Spleen (tissue), 13 donors: ENCODE measurements at regions of chr9 and their contacts with region 1.

Region 1: DNA sequence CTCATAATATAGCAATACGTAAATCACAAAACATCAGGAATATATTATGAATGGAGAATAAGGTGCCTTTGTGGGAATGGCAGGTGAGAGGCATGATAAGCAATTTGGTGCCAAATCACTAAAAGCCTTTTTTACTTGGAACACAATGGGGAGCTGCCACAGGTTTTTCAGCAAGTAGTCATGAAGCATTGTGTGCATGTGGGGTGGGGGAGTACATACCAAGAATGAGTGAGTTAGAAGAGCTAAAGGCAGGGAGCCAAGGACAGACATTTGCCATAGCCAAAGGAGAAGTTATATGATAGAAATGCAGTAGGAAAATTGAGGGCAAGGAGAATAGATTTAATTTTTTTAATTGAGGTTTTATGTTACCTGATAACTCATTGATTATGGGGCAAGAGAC is 445.0 kb upstream of the SMC2 start:
- DNase-seq: no peak
- H3K4me3 ChIP-seq: no peak overlapping the region
- H3K27ac ChIP-seq: no peak overlapping the region
- H3K4me1 ChIP-seq: no peaks in the 10 kb centered on the region
- H3K27me3 ChIP-seq: no peaks in the 10 kb centered on the region
- CTCF ChIP-seq: no peak
- POLR2A ChIP-seq: no peak

Region 2: GRCh38 chr9:103680581-103680980 is 31.5 kb after region 1 on chr9:
- intact Hi-C with region 1: no loop called
- DNase-seq: no peak
- H3K4me3 ChIP-seq: no peak overlapping the region
- H3K27ac ChIP-seq: no peak overlapping the region
- H3K4me1 ChIP-seq: no peaks in the 10 kb centered on the region
- H3K27me3 ChIP-seq: no peaks in the 10 kb centered on the region
- CTCF ChIP-seq: no peak
- POLR2A ChIP-seq: no peak

Region 3: GRCh38 chr9:103702572-103702971 is 53.5 kb after region 1 on chr9:
- intact Hi-C with region 1: loop called (anchors 10 kb)
- DNase-seq: no peak
- H3K4me3 ChIP-seq: no peak overlapping the region
- H3K27ac ChIP-seq: no peak overlapping the region
- H3K4me1 ChIP-seq: no peaks in the 10 kb centered on the region
- H3K27me3 ChIP-seq: no peaks in the 10 kb centered on the region
- CTCF ChIP-seq: no peak
- POLR2A ChIP-seq: no peak

Region 4: GRCh38 chr9:103789686-103790085 is 140.6 kb after region 1 on chr9:
- intact Hi-C with region 1: no loop called
- DNase-seq: no peak
- H3K4me3 ChIP-seq: no peak overlapping the region
- H3K27ac ChIP-seq: no peak overlapping the region
- H3K4me1 ChIP-seq: no peaks in the 10 kb centered on the region
- H3K27me3 ChIP-seq: no peaks in the 10 kb centered on the region
- CTCF ChIP-seq: peak in 2 of 11 experiments; percentile 12 to 24
- POLR2A ChIP-seq: no peak

Region 5: GRCh38 chr9:104104360-104104759 is 455.3 kb after region 1 on chr9:
- intact Hi-C with region 1: no loop called
- DNase-seq: no peak
- H3K4me3 ChIP-seq: no peak overlapping the region
- H3K27ac ChIP-seq: no peak overlapping the region
- H3K4me1 ChIP-seq: no peaks in the 10 kb centered on the region
- H3K27me3 ChIP-seq: no peaks in the 10 kb centered on the region
- CTCF ChIP-seq: no peak
- POLR2A ChIP-seq: no peak